ENCODE measurements at regions of chr22 and their contacts with region 1.

Region 1: GRCh38 chr22:33302049-33302545 is 243.9 kb upstream of the SYN3 start:
- DNase-seq: peak; percentile 90
- H3K4me3 ChIP-seq: no peak overlapping the region
- H3K27ac ChIP-seq: peak overlapping the region in 1 of 8 donors; percentile 10
- H3K4me1 ChIP-seq: peaks cover 5 to 53% (median 27%) of the 10 kb centered on the region in 6 donors
- H3K27me3 ChIP-seq: no peaks in the 10 kb centered on the region
- CTCF ChIP-seq: peak; percentile 56 to 84 (median 76)
- POLR2A ChIP-seq: no peak

Region 2: GRCh38 chr22:33105501-33105911 is 196.6 kb before region 1 on chr22:
- intact Hi-C with region 1: no loop called
- DNase-seq: no peak
- H3K4me3 ChIP-seq: no peak overlapping the region
- H3K27ac ChIP-seq: no peak overlapping the region
- H3K4me1 ChIP-seq: no peaks in the 10 kb centered on the region
- H3K27me3 ChIP-seq: peaks cover 0 to 24% (median 3%) of the 10 kb centered on the region in 7 donors
- CTCF ChIP-seq: no peak
- POLR2A ChIP-seq: no peak

Region 3: GRCh38 chr22:33232071-33232470 is 70.0 kb before region 1 on chr22:
- intact Hi-C with region 1: no loop called
- DNase-seq: no peak
- H3K4me3 ChIP-seq: no peak overlapping the region
- H3K27ac ChIP-seq: no peak overlapping the region
- H3K4me1 ChIP-seq: peaks cover 0 to 3% (median 0%) of the 10 kb centered on the region in 6 donors
- H3K27me3 ChIP-seq: no peaks in the 10 kb centered on the region
- CTCF ChIP-seq: no peak
- POLR2A ChIP-seq: no peak

Region 4: GRCh38 chr22:33389936-33390335 is 87.8 kb after region 1 on chr22:
- intact Hi-C with region 1: no loop called
- DNase-seq: no peak
- H3K4me3 ChIP-seq: no peak overlapping the region
- H3K27ac ChIP-seq: no peak overlapping the region
- H3K4me1 ChIP-seq: no peaks in the 10 kb centered on the region
- H3K27me3 ChIP-seq: no peaks in the 10 kb centered on the region
- CTCF ChIP-seq: no peak
- POLR2A ChIP-seq: no peak

Region 5: GRCh38 chr22:33666961-33667619 is 365.0 kb after region 1 on chr22:
- intact Hi-C with region 1: no loop called
- DNase-seq: no peak
- H3K4me3 ChIP-seq: no peak overlapping the region
- H3K27ac ChIP-seq: no peak overlapping the region
- H3K4me1 ChIP-seq: peaks cover 0 to 20% (median 7%) of the 10 kb centered on the region in 6 donors
- H3K27me3 ChIP-seq: no peaks in the 10 kb centered on the region
- CTCF ChIP-seq: no peak
- POLR2A ChIP-seq: no peak

Region 6: GRCh38 chr22:34111210-34111824 is 809.2 kb after region 1 on chr22:
- intact Hi-C with region 1: loop called (anchors 10 kb)
- DNase-seq: no peak
- H3K4me3 ChIP-seq: no peak overlapping the region
- H3K27ac ChIP-seq: no peak overlapping the region
- H3K4me1 ChIP-seq: no peaks in the 10 kb centered on the region
- H3K27me3 ChIP-seq: peaks cover 0 to 10% (median 0%) of the 10 kb centered on the region in 7 donors
- CTCF ChIP-seq: peak in 10 of 11 experiments; percentile 10 to 71 (median 56)
- POLR2A ChIP-seq: no peak

Region 7: GRCh38 chr22:35023692-35024363 is 1721.7 kb after region 1 on chr22:
- intact Hi-C with region 1: loop called (anchors 10 kb)
- DNase-seq: peak; percentile 87
- H3K4me3 ChIP-seq: no peak overlapping the region
- H3K27ac ChIP-seq: no peak overlapping the region
- H3K4me1 ChIP-seq: peaks cover 0 to 6% (median 0%) of the 10 kb centered on the region in 6 donors
- H3K27me3 ChIP-seq: peaks cover 0 to 60% (median 13%) of the 10 kb centered on the region in 7 donors
- CTCF ChIP-seq: peak in 10 of 11 experiments; percentile 36 to 88 (median 80)
- POLR2A ChIP-seq: no peak

Measured in spleen (tissue), 13 donors.